ENCODE measurements at regions of chr12 and their contacts with region 1.

Region 1: GRCh38 chr12:100348657-100349454 is 8.0 kb upstream of the SLC17A8 start:
- DNase-seq: peak; percentile 54
- ATAC-seq: peak; percentile 73
- H3K4me3 ChIP-seq: no peak overlapping the region
- H3K27ac ChIP-seq: no peak overlapping the region
- H3K4me1 ChIP-seq: peaks cover 12% of the 10 kb centered on the region
- H3K27me3 ChIP-seq: no peaks in the 10 kb centered on the region; a peak in 1 of 5 replicates
- CTCF ChIP-seq: peak; percentile 70
- EP300 ChIP-seq: no peak
- POLR2A ChIP-seq: no peak
- RAD21 ChIP-seq: peak; percentile 76

Region 2: GRCh38 chr12:100375038-100375735 is 26.3 kb after region 1 on chr12:
- CTCF ChIA-PET with region 1: no interaction called
- POLR2A ChIA-PET with region 1: no interaction called
- in situ Hi-C with region 1: no loop called
- intact Hi-C with region 1: no loop called
- DNase-seq: no peak
- ATAC-seq: no peak
- H3K4me3 ChIP-seq: no peak overlapping the region
- H3K27ac ChIP-seq: no peak overlapping the region
- H3K4me1 ChIP-seq: peaks cover 17% of the 10 kb centered on the region
- H3K27me3 ChIP-seq: peaks cover 0 to 1% of the 10 kb centered on the region in 2 experiments; a peak in 1 of 5 replicates
- CTCF ChIP-seq: no peak
- EP300 ChIP-seq: no peak
- POLR2A ChIP-seq: no peak
- RAD21 ChIP-seq: no peak

Region 3: DNA sequence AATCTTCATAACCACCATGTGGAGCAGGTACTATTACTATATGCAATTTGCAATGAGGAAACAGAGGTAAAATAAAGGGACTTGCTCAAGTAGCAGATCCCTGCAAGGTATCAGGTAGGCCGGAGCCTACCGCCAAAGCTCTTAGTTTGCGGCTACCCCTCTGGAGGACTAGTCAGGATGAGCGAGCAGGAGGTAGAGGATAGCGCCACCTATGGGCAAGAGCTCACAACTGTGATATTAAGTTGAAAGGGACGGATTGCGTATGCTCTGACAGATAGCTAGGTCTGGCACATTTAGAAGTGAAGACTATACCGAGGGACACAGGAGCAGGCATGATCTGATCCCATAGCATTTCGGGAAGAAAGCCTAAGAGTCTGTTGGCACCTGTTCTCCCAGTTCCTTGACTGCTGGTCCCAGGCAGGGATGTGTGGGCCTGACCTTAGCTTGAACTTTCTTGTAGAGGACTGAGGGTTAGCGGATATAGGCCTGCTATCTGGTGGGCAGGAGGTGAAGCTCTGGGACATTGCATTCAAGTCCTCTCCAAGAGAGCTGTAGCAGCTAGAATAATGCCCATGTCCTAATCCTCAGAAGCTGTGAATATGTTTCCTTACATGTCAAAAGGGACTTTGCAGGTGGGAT is 56.0 kb after region 1 on chr12:
- CTCF ChIA-PET with region 1: interaction called, 8 read pairs
- POLR2A ChIA-PET with region 1: no interaction called
- in situ Hi-C with region 1: no loop called
- intact Hi-C with region 1: loop called (anchors 2 kb)
- DNase-seq: peak; percentile 76
- ATAC-seq: peak; percentile 98
- H3K4me3 ChIP-seq: peak overlapping the region in 1 of 3 experiments; percentile 34; a peak in 2 of 6 replicates
- H3K27ac ChIP-seq: no peak overlapping the region
- H3K4me1 ChIP-seq: peaks cover 26% of the 10 kb centered on the region
- H3K27me3 ChIP-seq: no peaks in the 10 kb centered on the region
- CTCF ChIP-seq: peak; percentile 91
- EP300 ChIP-seq: no peak
- POLR2A ChIP-seq: no peak
- RAD21 ChIP-seq: peak; percentile 71

Region 4: DNA sequence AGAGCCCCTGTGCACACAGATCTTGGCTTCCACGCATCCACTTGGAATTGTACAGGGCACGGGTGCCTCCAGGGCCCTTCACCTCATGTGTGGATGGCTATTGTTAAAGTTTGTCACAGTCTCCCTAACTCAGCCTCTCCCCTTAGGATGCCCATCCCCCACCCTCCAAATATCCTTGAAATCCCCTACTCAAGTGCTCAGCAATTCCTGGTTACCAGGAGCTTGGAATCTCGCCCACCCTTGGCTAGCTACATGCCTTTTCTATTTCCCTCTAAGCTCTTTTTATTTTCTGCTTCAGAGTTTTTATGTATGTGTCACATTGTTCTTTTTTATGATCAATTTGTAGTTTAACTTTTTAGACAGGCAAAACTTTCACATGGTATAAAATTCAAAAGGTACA is 111.8 kb after region 1 on chr12:
- CTCF ChIA-PET with region 1: no interaction called
- POLR2A ChIA-PET with region 1: no interaction called
- in situ Hi-C with region 1: no loop called
- intact Hi-C with region 1: loop called (anchors 1 kb)
- DNase-seq: no peak
- ATAC-seq: no peak
- H3K4me3 ChIP-seq: no peak overlapping the region
- H3K27ac ChIP-seq: no peak overlapping the region
- H3K4me1 ChIP-seq: peaks cover 43% of the 10 kb centered on the region
- H3K27me3 ChIP-seq: no peaks in the 10 kb centered on the region
- CTCF ChIP-seq: no peak
- EP300 ChIP-seq: no peak
- POLR2A ChIP-seq: no peak
- RAD21 ChIP-seq: no peak

Region 5: GRCh38 chr12:100554608-100555077 is 205.8 kb after region 1 on chr12:
- CTCF ChIA-PET with region 1: interaction called, 74 read pairs
- POLR2A ChIA-PET with region 1: no interaction called
- in situ Hi-C with region 1: loop called (anchors 5 kb)
- intact Hi-C with region 1: loop called (anchors 1 kb)
- DNase-seq: peak; percentile 88
- ATAC-seq: peak; percentile 74
- H3K4me3 ChIP-seq: no peak overlapping the region
- H3K27ac ChIP-seq: peak overlapping the region; percentile 44
- H3K4me1 ChIP-seq: peaks cover 31% of the 10 kb centered on the region
- H3K27me3 ChIP-seq: no peaks in the 10 kb centered on the region; a peak in 1 of 5 replicates
- CTCF ChIP-seq: peak; percentile 82
- EP300 ChIP-seq: no peak
- POLR2A ChIP-seq: no peak
- RAD21 ChIP-seq: peak; percentile 84

Region 6: DNA sequence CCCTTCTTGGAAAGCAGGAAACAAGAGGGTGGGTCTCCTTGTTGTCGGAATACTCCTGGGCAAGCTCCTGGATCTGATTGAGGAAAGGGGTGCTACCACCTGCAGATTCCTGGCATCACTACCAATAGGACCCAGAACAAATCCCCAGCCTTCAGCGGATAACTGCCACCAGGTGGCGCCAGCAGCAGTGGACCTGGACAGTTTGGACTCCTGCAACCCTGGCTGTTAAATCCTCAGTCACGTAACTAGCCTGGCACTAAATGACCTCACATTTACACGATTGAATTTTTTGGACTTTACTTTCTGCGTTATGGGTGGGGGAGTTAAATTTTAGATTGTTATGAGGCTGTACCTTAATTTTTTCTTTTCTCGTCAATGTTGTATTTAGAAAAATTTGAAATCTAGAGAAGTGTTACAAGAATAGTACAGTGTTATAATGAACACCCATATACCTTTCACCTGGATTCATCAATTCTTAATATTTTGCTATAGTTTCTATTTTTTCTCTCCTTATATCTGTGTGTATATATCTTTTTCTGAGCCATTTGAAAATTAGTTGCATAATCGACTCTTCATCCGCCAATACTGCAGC is 320.2 kb after region 1 on chr12:
- CTCF ChIA-PET with region 1: interaction called, 12 read pairs
- POLR2A ChIA-PET with region 1: no interaction called
- in situ Hi-C with region 1: no loop called
- intact Hi-C with region 1: loop called (anchors 1 kb)
- DNase-seq: peak; percentile 66
- ATAC-seq: peak; percentile 88
- H3K4me3 ChIP-seq: no peak overlapping the region
- H3K27ac ChIP-seq: no peak overlapping the region
- H3K4me1 ChIP-seq: peaks cover 11% of the 10 kb centered on the region; the same call in 1 of the 2 replicates
- H3K27me3 ChIP-seq: peaks cover 1 to 4% of the 10 kb centered on the region in 2 experiments; a peak in 3 of 5 replicates
- CTCF ChIP-seq: peak; percentile 86
- EP300 ChIP-seq: no peak
- POLR2A ChIP-seq: no peak
- RAD21 ChIP-seq: peak; percentile 47; the same call in 1 of the 2 replicates

Region 7: DNA sequence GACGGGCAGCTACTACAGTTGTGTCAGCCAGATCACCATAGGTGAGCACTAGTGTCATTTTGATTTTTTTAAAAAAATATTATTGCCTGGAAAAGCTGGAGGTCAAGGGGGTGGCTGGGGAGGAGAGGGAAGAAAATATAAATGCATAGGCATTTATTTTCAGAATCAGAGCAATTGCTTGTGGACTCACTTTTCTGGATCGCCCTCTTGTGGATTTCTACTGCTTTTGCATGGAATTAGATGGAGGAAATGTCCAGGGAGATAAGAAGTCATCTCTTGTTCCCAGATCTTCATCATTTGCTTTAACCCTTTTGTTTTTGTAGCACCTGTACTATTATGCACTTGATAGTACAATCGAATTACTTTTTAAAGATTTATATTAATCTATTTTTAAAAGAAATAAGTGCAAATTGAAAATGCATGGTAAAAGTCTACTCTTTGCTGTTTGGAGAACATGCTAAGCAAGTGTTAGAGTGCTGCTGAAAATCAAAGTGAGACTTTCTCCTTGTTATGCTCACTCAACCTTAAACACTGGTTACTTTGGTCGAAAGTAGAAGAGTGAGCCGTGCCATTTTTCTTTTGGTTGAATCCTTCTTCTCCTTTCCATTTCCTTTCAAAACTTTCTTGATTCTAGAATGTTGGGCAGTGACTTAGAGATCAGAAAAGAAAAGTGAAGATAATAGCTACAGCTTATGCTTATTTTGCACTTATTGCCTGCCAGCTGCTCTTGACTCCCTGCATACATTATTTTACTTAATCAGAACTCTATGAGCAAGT is 385.1 kb after region 1 on chr12:
- CTCF ChIA-PET with region 1: interaction called, 12 read pairs
- POLR2A ChIA-PET with region 1: no interaction called
- in situ Hi-C with region 1: loop called (anchors 10 kb)
- intact Hi-C with region 1: loop called (anchors 1 kb)
- DNase-seq: peak; percentile 20
- ATAC-seq: peak; percentile 56
- H3K4me3 ChIP-seq: no peak overlapping the region
- H3K27ac ChIP-seq: no peak overlapping the region
- H3K4me1 ChIP-seq: no peaks in the 10 kb centered on the region
- H3K27me3 ChIP-seq: no peaks in the 10 kb centered on the region
- CTCF ChIP-seq: peak; percentile 56
- EP300 ChIP-seq: no peak
- POLR2A ChIP-seq: no peak
- RAD21 ChIP-seq: no peak

Region 8: GRCh38 chr12:100741084-100741711 is 392.3 kb after region 1 on chr12:
- CTCF ChIA-PET with region 1: no interaction called
- POLR2A ChIA-PET with region 1: no interaction called
- in situ Hi-C with region 1: loop called (anchors 10 kb)
- intact Hi-C with region 1: loop called (anchors 1 kb)
- DNase-seq: peak; percentile 10
- ATAC-seq: no peak; the same call in 2 of the 3 replicates
- H3K4me3 ChIP-seq: no peak overlapping the region
- H3K27ac ChIP-seq: no peak overlapping the region
- H3K4me1 ChIP-seq: no peaks in the 10 kb centered on the region
- H3K27me3 ChIP-seq: no peaks in the 10 kb centered on the region
- CTCF ChIP-seq: peak; percentile 57
- EP300 ChIP-seq: no peak
- POLR2A ChIP-seq: no peak
- RAD21 ChIP-seq: no peak

Measured in HepG2 (cell line).